H1 (cell line): ENCODE measurements at regions of chr19 and their contacts with region 1.

Region 1: GRCh38 chr19:35140962-35141637 is 2.0 kb upstream of the FXYD7 start:
- DNase-seq: peak; percentile 86 to 98
- H3K4me3 ChIP-seq: peak overlapping the region; percentile 12 to 68 (median 50)
- H3K27ac ChIP-seq: no peak overlapping the region
- H3K4me1 ChIP-seq: peaks cover 5 to 32% (median 25%) of the 10 kb centered on the region in 4 experiments
- H3K27me3 ChIP-seq: peaks cover 0 to 18% (median 8%) of the 10 kb centered on the region in 4 experiments; a peak in 5 of 7 replicates
- CTCF ChIP-seq: peak; percentile 44 to 65 (median 61)
- EP300 ChIP-seq: no peak
- POLR2A ChIP-seq: no peak
- RAD21 ChIP-seq: peak; percentile 55 to 64

Region 2: DNA sequence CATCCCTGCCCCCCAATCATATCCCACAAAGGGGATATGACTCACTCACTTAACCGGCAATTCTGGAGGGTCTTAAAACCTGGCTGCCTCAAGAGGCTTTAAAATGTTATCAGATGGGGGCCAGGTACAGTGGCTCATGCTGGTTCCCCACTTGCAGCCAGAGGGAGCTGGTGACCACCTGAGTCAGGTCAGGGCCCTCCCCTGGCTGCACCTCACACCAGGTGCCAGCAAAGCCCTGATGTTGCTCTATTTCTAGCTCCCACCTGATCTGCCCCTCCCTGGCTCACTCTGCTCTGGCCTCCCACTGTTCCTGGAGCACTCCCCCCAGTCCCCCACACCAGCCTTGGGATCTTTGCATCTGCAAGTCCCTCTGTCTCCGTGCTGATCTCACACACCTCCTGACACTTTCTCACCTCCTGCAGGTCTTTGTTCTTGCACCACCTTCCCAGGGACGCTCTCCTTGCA is 85.4 kb before region 1 on chr19:
- CTCF ChIA-PET with region 1: interaction called, 41 read pairs
- POLR2A ChIA-PET with region 1: interaction called, 4 read pairs
- DNase-seq: peak; percentile 75
- H3K4me3 ChIP-seq: 0 out of 8 replicates have a peak overlapping the region, but pooled peaks of 1 of the 4 experiments have one; percentile 26
- H3K27ac ChIP-seq: no peak overlapping the region
- H3K4me1 ChIP-seq: peaks cover 0 to 11% (median 2%) of the 10 kb centered on the region in 4 experiments; a peak in 5 of 7 replicates
- H3K27me3 ChIP-seq: no peaks in the 10 kb centered on the region
- CTCF ChIP-seq: peak; percentile 83 to 91 (median 89)
- EP300 ChIP-seq: no peak
- POLR2A ChIP-seq: no peak
- RAD21 ChIP-seq: peak; percentile 67 to 72

Region 3: GRCh38 chr19:35114353-35115176 is 26.5 kb before region 1 on chr19:
- CTCF ChIA-PET with region 1: interaction called, 154 read pairs
- POLR2A ChIA-PET with region 1: interaction called, 9 read pairs
- DNase-seq: peak; percentile 73 to 99
- H3K4me3 ChIP-seq: peak overlapping the region in 3 of 4 experiments; percentile 23 to 56 (median 31); a peak in 5 of 8 replicates
- H3K27ac ChIP-seq: no peak overlapping the region
- H3K4me1 ChIP-seq: peaks cover 0 to 23% (median 14%) of the 10 kb centered on the region in 4 experiments; a peak in 6 of 7 replicates
- H3K27me3 ChIP-seq: peaks cover 0 to 2% (median 0%) of the 10 kb centered on the region in 4 experiments; a peak in 1 of 7 replicates
- CTCF ChIP-seq: peak; percentile 92 to 99 (median 94)
- EP300 ChIP-seq: no peak
- POLR2A ChIP-seq: no peak
- RAD21 ChIP-seq: peak; percentile 86 to 91

Region 4: DNA sequence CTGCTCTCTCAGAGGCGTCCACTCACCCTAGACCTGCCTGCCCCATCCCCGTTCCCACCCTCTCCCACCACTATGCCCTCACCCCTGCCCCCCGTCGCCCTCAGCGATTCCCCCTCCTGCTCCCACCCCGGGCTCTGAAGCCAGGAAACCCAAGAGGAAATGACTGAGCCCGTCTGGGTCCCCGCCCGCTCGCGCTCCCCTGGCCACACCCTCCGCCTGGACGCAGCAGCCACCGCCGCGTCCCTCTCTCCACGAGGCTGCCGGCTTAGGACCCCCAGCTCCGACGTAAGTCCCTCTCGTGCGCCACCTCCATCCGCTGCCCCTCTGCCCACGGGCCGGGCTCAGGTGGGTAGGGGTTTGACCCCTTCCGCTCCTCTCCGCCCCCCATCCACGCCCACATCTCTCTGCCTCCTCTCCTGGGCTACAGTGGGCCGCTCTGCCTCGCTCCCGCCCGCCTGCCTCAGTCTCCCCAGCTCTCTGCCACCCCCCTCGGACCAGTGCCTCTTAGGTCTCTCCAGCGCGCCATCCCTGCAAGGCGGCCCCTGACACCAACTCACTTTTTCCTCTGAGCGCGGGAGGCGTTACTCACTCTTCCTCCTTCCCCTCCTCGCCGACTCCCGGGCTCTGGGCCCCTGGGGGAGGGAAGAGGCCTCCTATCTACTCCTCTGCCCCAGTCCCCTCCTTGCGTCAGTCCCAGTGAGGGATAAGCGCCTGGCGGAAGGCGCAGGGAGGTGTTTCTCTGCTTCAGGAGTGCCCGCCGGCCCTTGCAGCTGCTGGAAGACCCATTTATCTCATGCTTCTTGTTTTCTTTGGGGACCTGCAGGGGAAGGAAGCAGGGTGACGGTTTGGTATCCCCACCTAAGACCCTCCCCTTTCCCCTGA is 13.7 kb after region 1 on chr19 and contains the start of gene FXYD5:
- CTCF ChIA-PET with region 1: interaction called, 60 read pairs
- POLR2A ChIA-PET with region 1: interaction called, 67 read pairs
- DNase-seq: peak in 1 of 2 experiments; percentile 72
- H3K4me3 ChIP-seq: peak within 1 kb of the TSS; percentile 68 to 80 (median 74)
- H3K27ac ChIP-seq: peak within 1 kb of the TSS; percentile 21; the same call in 1 of the 2 replicates
- H3K4me1 ChIP-seq: peaks cover 4 to 28% (median 19%) of the 10 kb centered on the region in 4 experiments
- H3K27me3 ChIP-seq: peaks cover 0 to 5% (median 3%) of the 10 kb centered on the region in 4 experiments; a peak in 3 of 7 replicates
- CTCF ChIP-seq: peak in 1 of 3 experiments; percentile 3; a peak in 1 of 4 replicates
- EP300 ChIP-seq: no peak
- POLR2A ChIP-seq: no peak
- RAD21 ChIP-seq: no peak
- total RNA-seq, gene FXYD5: 99.0 and 104 TPM in 2 replicates